ENCODE measurements at regions of chr16 and their contacts with region 1.

Region 1: DNA sequence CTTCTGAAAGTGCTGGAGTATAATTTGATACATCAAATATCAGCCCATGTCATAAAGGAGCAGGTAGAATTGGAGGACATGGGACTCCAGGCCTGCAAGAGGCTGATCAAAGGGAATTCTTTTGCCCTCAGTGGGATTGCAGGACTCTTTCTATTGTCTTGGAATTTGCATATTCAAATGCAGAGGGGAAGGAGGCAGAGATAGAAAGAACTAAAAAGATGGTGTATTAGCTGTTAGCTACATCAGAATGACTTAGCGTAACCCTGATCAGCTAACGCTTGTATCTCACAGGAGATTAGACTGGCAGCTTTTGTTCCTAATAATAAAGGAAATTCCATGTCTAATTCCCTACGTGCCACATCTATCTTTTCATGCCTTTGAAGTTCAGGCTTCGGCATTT is 1014.7 kb upstream of the RBFOX1 start:
- DNase-seq: no peak
- H3K4me3 ChIP-seq: no peak overlapping the region
- H3K27ac ChIP-seq: no peak overlapping the region
- H3K4me1 ChIP-seq: no peaks in the 10 kb centered on the region
- H3K27me3 ChIP-seq: no peaks in the 10 kb centered on the region
- CTCF ChIP-seq: no peak

Region 2: GRCh38 chr16:6265968-6266367 is 52.0 kb before region 1 on chr16:
- intact Hi-C with region 1: loop called (anchors 10 kb)
- DNase-seq: no peak
- H3K4me3 ChIP-seq: no peak overlapping the region
- H3K27ac ChIP-seq: no peak overlapping the region
- H3K4me1 ChIP-seq: no peaks in the 10 kb centered on the region
- H3K27me3 ChIP-seq: no peaks in the 10 kb centered on the region
- CTCF ChIP-seq: no peak

Measured in tibial artery (tissue), 4 donors.